BJ (cell line): ENCODE measurements at regions of chr16 and their contacts with region 1.

Region 1: GRCh38 chr16:11715246-11715947 is 27.3 kb downstream of the TXNDC11 start:
- DNase-seq: no peak
- H3K4me3 ChIP-seq: no peak overlapping the region
- H3K27me3 ChIP-seq: no peaks in the 10 kb centered on the region
- CTCF ChIP-seq: no peak

Region 2: DNA sequence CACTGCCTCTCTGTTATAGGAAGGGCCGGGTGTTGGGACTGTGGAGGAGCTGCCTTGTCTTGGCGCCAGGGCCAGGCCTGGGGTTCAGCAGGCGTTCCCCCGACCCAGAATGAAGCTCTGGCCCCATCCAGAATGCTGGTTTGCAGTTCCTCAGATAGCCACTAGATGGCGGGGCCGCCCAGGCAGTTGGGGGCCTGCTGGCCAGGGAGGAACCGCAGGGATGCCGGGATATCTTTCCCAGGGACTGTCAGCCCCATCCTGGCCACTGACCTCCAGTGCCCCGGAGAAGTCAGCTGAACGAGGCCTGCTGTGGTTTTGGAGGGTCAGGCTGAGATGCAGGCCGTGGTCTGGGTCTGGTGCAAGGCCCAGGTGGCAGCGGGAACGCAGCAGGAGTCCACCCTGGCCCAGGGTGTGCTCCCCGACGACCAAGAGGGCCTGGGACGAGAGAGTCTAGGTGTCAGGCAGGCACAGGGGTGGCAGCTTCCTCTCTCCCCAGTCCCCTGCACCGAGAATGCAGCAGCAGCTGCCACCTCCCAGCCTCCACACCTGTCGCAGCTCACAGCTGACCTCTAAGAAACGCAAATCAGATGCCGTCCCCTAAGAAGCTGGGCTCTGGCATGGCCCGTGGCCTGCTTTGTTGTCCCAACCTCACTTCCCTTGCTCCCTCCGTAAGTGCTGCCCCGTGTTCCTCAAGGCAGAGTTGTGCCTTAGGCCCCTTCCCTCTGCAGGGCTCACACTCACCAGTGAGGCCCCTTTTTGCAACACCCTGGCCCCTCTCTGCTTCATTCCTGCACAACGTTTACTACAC is 319.0 kb before region 1 on chr16:
- CTCF ChIA-PET with region 1: interaction called, 29 read pairs
- POLR2A ChIA-PET with region 1: no interaction called
- DNase-seq: no peak
- H3K4me3 ChIP-seq: no peak overlapping the region
- H3K27me3 ChIP-seq: 0 out of 2 replicates have a peak, but pooled peaks cover 2% of the 10 kb centered on the region
- CTCF ChIP-seq: peak; percentile 99

Region 3: GRCh38 chr16:11725457-11725856 is 10.1 kb after region 1 on chr16:
- CTCF ChIA-PET with region 1: interaction called, 14 read pairs
- POLR2A ChIA-PET with region 1: no interaction called
- DNase-seq: no peak
- H3K4me3 ChIP-seq: no peak overlapping the region
- H3K27me3 ChIP-seq: no peaks in the 10 kb centered on the region
- CTCF ChIP-seq: no peak

Region 4: DNA sequence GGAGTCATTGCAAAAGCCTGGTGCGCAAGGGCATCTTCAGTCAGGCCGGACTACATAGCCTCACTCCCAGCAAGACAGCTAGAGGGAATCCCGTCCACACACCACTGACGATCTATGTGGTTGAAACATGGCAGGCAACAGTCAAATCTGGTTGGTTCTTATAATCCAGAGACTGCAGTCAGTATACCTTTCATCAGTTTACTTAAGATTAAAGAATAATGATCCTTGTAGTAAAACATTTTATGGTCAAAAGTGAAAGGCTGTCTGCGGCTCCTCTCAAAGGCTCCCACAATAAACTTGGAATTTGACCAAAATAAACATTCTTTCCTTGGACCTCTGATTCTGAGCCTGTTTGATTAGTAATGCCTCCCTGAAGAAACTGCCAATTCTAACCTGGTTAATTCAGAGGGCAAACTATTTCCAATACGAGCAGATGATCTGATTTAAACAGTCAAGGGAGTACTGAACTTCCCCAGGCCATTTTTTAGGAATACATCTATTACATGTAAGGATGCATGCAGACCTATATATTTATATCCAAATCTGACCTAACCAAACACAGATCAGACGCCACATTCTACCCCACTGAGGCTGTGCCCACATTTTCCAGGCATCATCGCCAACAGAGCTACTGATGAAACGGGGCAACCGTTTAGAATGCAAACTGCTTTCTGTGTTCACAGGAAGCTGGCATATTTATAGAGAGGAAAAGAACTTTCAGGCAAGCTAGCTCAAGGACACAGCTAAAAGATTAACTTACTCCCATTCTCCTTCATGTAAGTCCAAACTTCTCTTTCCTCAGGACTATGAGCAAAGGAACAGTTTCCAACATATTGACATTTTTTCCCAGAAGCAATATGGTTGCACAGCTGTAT is 42.5 kb after region 1 on chr16:
- CTCF ChIA-PET with region 1: no interaction called
- POLR2A ChIA-PET with region 1: no interaction called
- DNase-seq: no peak
- H3K4me3 ChIP-seq: no peak overlapping the region
- H3K27me3 ChIP-seq: no peaks in the 10 kb centered on the region
- CTCF ChIP-seq: no peak